Posterior vena cava (tissue), 2 donors: ENCODE measurements at regions of chr2 and their contacts with region 1.

Region 1: GRCh38 chr2:15636972-15637785 is 45.5 kb downstream of the DDX1 start:
- DNase-seq: peak; percentile 87

Region 2: GRCh38 chr2:16487686-16488085 is 850.5 kb after region 1 on chr2:
- intact Hi-C with region 1: loop called in 1 of 2 experiments (anchors 10 kb)
- DNase-seq: no peak

Region 3: GRCh38 chr2:16507655-16508489 is 870.7 kb after region 1 on chr2:
- intact Hi-C with region 1: loop called in 1 of 2 experiments (anchors 5 kb)
- DNase-seq: no peak